RWPE1 (cell line): ENCODE measurements at regions of chr12 and their contacts with region 1.

Region 1: DNA sequence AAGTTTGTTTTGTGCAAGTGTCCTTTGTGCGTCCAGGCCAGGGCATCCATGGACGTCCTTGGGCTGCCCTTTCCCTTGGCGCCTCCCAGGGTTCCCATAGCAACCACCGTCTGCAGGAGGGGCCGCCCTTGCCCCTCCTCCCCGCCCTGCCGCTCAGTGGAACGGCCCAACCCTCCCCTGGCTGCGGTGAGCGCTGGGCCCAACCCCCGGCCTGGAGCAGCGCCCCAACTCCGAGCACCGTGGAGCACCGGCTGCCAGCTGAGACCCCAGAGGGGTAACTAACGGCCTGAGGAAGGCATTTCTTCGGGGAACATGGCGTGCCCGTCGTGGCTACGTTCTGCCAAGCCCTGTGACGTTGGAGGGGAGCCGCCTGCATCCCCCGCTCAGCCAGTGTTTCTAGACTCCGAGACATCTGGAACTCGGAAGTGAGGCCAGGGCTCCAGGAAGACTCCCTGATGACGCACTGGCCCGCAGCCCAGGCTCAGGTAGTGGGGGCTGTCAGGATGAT is 5.3 kb upstream of the ACACB start:
- DNase-seq: peak; percentile 73
- H3K27ac ChIP-seq: peak overlapping the region; percentile 90
- CTCF ChIP-seq: no peak

Region 2: DNA sequence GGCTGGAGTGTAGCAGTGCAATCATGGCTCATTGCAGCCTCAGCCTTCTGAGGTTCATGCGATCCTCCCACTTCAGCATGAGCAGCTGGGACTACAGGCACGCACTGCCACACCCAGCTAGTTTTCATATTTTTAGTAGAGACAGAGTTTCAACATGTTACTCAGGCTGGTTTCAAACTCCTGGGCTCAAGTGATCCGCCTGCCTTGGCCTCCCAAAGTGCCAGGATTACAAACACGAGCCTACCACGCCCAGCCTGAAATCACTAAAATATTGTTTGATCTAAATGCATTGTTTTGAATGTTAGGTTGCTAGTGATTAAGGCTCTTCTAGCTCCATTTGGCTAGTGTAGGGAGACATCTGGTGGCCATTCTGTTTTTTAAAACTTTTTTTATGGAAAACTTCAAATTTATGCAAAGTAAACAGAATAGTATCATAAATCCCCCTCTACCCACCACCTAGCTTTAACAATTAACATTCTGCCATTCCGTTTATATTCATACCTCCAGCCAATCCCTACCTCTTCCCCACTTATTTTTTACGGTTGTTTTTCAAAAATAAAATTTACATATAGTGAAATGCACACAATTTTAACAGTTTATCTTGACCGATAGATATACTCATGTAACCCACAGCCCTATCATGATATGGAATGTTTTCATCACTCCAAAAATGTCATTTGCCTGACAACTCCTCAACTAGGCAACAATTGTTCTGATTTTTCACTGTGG is 274.5 kb after region 1 on chr12:
- CTCF ChIA-PET with region 1: interaction called, 12 read pairs
- POLR2A ChIA-PET with region 1: no interaction called
- DNase-seq: peak; percentile 56
- H3K27ac ChIP-seq: peak overlapping the region; percentile 61
- CTCF ChIP-seq: peak; percentile 53

Region 3: GRCh38 chr12:109544955-109545531 is 434.0 kb after region 1 on chr12:
- CTCF ChIA-PET with region 1: no interaction called
- POLR2A ChIA-PET with region 1: no interaction called
- DNase-seq: peak; percentile 23
- H3K27ac ChIP-seq: peak overlapping the region; percentile 56
- CTCF ChIP-seq: no peak